ENCODE measurements at regions of chr21 and their contacts with region 1.

Region 1: GRCh38 chr21:45140346-45140940 is 66.1 kb downstream of the ADARB1 start:
- DNase-seq: peak; percentile 88
- H3K4me3 ChIP-seq: no peak overlapping the region
- H3K27ac ChIP-seq: no peak overlapping the region
- H3K4me1 ChIP-seq: no peaks in the 10 kb centered on the region
- H3K27me3 ChIP-seq: no peaks in the 10 kb centered on the region
- CTCF ChIP-seq: peak; percentile 90 to 93
- POLR2A ChIP-seq: no peak

Region 2: GRCh38 chr21:44927587-44928461 is 212.6 kb before region 1 on chr21:
- CTCF ChIA-PET with region 1: interaction called, 25 read pairs
- POLR2A ChIA-PET with region 1: no interaction called
- dilution Hi-C with region 1: loop called (anchors 25 kb)
- intact Hi-C with region 1: no loop called
- DNase-seq: no peak
- H3K4me3 ChIP-seq: no peak overlapping the region
- H3K27ac ChIP-seq: no peak overlapping the region
- H3K4me1 ChIP-seq: peaks cover 31% of the 10 kb centered on the region
- H3K27me3 ChIP-seq: peaks cover 7 to 16% of the 10 kb centered on the region in 2 experiments
- CTCF ChIP-seq: no peak
- POLR2A ChIP-seq: no peak

Region 3: GRCh38 chr21:45011911-45012660 is 128.4 kb before region 1 on chr21:
- CTCF ChIA-PET with region 1: interaction called, 16 read pairs
- POLR2A ChIA-PET with region 1: no interaction called
- dilution Hi-C with region 1: no loop called
- intact Hi-C with region 1: no loop called
- DNase-seq: peak; percentile 78
- H3K4me3 ChIP-seq: no peak overlapping the region
- H3K27ac ChIP-seq: peak overlapping the region; percentile 77
- H3K4me1 ChIP-seq: peaks cover 22% of the 10 kb centered on the region
- H3K27me3 ChIP-seq: no peaks in the 10 kb centered on the region
- CTCF ChIP-seq: peak; percentile 28 to 50
- POLR2A ChIP-seq: no peak

Region 4: GRCh38 chr21:45130324-45130774 is 10.1 kb before region 1 on chr21:
- CTCF ChIA-PET with region 1: interaction called, 137 read pairs
- POLR2A ChIA-PET with region 1: no interaction called
- dilution Hi-C with region 1: no loop called
- intact Hi-C with region 1: no loop called
- DNase-seq: peak; percentile 72
- H3K4me3 ChIP-seq: peak overlapping the region; percentile 9 to 56 (median 12)
- H3K27ac ChIP-seq: peak overlapping the region; percentile 83
- H3K4me1 ChIP-seq: peaks cover 45% of the 10 kb centered on the region
- H3K27me3 ChIP-seq: no peaks in the 10 kb centered on the region
- CTCF ChIP-seq: no peak
- POLR2A ChIP-seq: no peak

Region 5: GRCh38 chr21:45294509-45295291 is 154.3 kb after region 1 on chr21:
- CTCF ChIA-PET with region 1: interaction called, 137 read pairs
- POLR2A ChIA-PET with region 1: interaction called, 5 read pairs
- dilution Hi-C with region 1: no loop called
- intact Hi-C with region 1: loop called (anchors 5 kb)
- DNase-seq: peak; percentile 98
- H3K4me3 ChIP-seq: no peak overlapping the region
- H3K27ac ChIP-seq: peak overlapping the region; percentile 100
- H3K4me1 ChIP-seq: peaks cover 35% of the 10 kb centered on the region
- H3K27me3 ChIP-seq: no peaks in the 10 kb centered on the region
- CTCF ChIP-seq: no peak
- POLR2A ChIP-seq: peak; percentile 87

Region 6: DNA sequence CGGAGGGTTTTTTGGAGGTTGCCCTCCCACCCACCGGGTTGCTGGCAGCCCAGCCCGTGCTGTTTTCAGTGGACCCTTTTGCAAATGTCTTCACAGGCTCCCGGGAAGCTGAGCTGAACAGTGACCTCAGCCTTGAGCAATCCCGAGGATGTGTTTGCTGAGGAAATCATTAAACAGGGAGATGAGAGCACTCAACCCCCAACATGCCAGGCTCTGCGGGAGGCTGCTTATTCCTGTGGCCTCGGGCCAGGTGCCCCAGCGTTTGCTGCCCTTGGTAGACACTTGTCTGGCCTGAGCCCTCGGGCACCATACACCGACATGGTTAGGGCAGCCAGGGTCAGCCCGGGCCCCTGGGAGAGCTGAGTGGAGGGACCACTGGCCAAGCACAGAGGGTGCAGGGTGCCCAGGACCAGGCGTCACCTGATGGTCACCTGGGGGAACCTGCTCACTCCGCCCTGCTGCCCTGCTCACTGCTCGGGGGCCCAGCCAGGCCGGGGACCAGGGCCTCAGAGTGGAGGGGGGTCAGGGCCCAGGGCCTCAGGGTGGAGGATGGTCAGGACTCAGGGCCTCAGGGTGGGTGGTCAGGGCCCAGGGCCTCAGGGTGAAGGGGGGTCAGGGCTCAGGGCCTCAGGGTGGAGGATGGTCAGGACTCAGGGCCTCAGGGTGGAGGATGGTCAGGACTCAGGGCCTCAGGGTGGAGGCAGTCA is 189.8 kb after region 1 on chr21:
- CTCF ChIA-PET with region 1: no interaction called
- POLR2A ChIA-PET with region 1: no interaction called
- dilution Hi-C with region 1: no loop called
- intact Hi-C with region 1: no loop called
- DNase-seq: no peak
- H3K4me3 ChIP-seq: no peak overlapping the region
- H3K27ac ChIP-seq: no peak overlapping the region
- H3K4me1 ChIP-seq: no peaks in the 10 kb centered on the region
- H3K27me3 ChIP-seq: no peaks in the 10 kb centered on the region
- CTCF ChIP-seq: no peak
- POLR2A ChIP-seq: no peak

Region 7: GRCh38 chr21:45820171-45821091 is 680.0 kb after region 1 on chr21:
- CTCF ChIA-PET with region 1: interaction called, 33 read pairs
- POLR2A ChIA-PET with region 1: no interaction called
- dilution Hi-C with region 1: no loop called
- intact Hi-C with region 1: loop called (anchors 1 kb)
- DNase-seq: peak; percentile 60
- H3K4me3 ChIP-seq: no peak overlapping the region
- H3K27ac ChIP-seq: no peak overlapping the region
- H3K4me1 ChIP-seq: no peaks in the 10 kb centered on the region
- H3K27me3 ChIP-seq: peaks cover 3 to 4% of the 10 kb centered on the region in 2 experiments
- CTCF ChIP-seq: peak; percentile 77 to 87
- POLR2A ChIP-seq: no peak

Region 8: GRCh38 chr21:46184625-46185555 is 1044.4 kb after region 1 on chr21:
- CTCF ChIA-PET with region 1: no interaction called
- POLR2A ChIA-PET with region 1: no interaction called
- dilution Hi-C with region 1: no loop called
- intact Hi-C with region 1: no loop called
- DNase-seq: peak; percentile 95
- H3K4me3 ChIP-seq: peak overlapping the region; percentile 12 to 55 (median 52)
- H3K27ac ChIP-seq: peak overlapping the region; percentile 35
- H3K4me1 ChIP-seq: peaks cover 31% of the 10 kb centered on the region
- H3K27me3 ChIP-seq: no peaks in the 10 kb centered on the region
- CTCF ChIP-seq: no peak
- POLR2A ChIP-seq: peak; percentile 36

Measured in endothelial cell of umbilical vein (primary cell).